Activated T-helper 1 cell treated with anti-CD3 and anti-CD28 coated beads, Interleukin-12 subunit alpha, Interleukin-12 subunit beta, Interleukin-2, Interleukin-4 antibody, amounts not matched to agents 30 ng/mL and 10 ng/mL and 1 ng/mL, durations not matched to agents 14 hours and 24 hours and 36 hours (primary cell): ENCODE measurements at regions of chr5 and their contacts with region 1.

Region 1: DNA sequence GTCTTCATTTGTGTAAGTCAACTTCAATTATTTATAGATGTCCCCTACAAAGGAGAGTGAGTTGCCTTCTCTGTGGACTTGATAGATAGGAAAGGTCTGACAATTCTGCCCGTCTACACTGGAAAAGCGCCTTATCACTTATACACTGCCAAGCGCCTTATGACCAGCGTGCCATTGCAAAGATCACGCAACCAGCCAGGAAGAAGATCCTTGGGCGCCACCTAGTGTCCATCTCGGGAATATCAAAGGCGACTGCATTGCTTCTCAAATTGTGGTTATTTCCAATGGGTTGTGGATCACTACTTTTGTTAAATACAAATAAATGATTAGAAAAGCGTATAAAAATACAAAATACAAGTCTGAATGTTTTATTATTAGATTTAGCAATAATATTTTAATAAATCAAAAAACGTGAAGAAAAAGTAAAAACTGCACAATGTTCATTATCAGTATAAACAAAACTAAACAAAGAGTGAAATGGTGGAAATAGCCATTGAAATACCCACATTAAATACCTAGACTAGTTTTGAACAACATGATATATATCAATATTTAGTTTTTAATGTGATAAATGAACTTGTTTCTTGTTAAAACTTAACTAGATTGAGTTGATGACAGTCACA is 27.8 kb downstream of the SUB1 start:
- DNase-seq: peak; percentile 72
- H3K4me3 Mint-ChIP-seq: no peak overlapping the region
- H3K27ac Mint-ChIP-seq: no peak overlapping the region
- H3K4me1 Mint-ChIP-seq: no peaks in the 10 kb centered on the region
- H3K27me3 Mint-ChIP-seq: no peaks in the 10 kb centered on the region

Region 2: DNA sequence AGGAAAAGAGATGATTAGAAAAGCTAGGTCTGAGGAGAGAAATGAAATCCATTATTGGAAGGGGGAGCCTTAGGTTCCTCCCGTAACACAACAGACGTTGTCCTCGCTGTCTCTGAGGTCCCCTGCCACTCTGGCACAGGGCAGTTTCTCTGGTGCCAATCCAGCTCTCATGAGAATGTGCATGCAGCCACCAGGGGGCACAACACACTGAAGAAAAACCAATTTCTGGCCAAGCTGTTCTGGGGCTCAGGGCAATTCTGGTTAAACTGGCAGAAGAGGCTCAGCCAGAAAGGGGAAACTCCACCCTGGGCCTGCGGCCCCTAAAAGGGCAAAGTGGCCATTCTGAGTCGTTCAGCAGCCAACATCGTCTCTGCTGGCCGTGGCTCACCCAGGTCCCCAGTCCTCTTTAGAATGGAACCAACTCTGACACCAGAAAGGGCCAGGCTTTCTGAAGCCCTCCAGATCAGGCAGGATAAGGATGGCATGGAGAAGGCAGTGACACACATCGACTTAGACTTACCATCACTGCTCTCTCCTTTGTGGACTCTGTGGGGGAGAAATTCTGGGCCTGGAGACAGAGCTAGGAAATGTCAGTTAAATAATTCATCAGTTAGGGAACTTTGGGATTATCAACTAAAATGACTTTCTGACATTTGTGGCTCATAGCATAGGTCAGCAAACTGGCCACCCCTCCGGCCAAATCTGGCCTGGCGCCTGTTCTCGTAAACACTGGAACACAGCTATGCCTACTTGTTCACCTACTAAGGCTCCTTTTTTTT is 380.5 kb before region 1 on chr5:
- intact Hi-C with region 1: loop called (anchors 1 kb)
- DNase-seq: peak; percentile 61
- H3K4me3 Mint-ChIP-seq: no peak overlapping the region
- H3K27ac Mint-ChIP-seq: peak overlapping the region; percentile 47
- H3K4me1 Mint-ChIP-seq: peaks cover 26% of the 10 kb centered on the region
- H3K27me3 Mint-ChIP-seq: peaks cover 1% of the 10 kb centered on the region

Region 3: GRCh38 chr5:32329308-32329834 is 283.8 kb before region 1 on chr5:
- intact Hi-C with region 1: loop called (anchors 1 kb)
- DNase-seq: peak; percentile 40
- H3K4me3 Mint-ChIP-seq: no peak overlapping the region
- H3K27ac Mint-ChIP-seq: no peak overlapping the region
- H3K4me1 Mint-ChIP-seq: peaks cover 4% of the 10 kb centered on the region
- H3K27me3 Mint-ChIP-seq: no peaks in the 10 kb centered on the region

Region 4: GRCh38 chr5:32388432-32389129 is 224.6 kb before region 1 on chr5:
- intact Hi-C with region 1: loop called (anchors 5 kb)
- DNase-seq: no peak
- H3K4me3 Mint-ChIP-seq: peak overlapping the region; percentile 9
- H3K27ac Mint-ChIP-seq: peak overlapping the region; percentile 93
- H3K4me1 Mint-ChIP-seq: peaks cover 22% of the 10 kb centered on the region
- H3K27me3 Mint-ChIP-seq: no peaks in the 10 kb centered on the region

Region 5: DNA sequence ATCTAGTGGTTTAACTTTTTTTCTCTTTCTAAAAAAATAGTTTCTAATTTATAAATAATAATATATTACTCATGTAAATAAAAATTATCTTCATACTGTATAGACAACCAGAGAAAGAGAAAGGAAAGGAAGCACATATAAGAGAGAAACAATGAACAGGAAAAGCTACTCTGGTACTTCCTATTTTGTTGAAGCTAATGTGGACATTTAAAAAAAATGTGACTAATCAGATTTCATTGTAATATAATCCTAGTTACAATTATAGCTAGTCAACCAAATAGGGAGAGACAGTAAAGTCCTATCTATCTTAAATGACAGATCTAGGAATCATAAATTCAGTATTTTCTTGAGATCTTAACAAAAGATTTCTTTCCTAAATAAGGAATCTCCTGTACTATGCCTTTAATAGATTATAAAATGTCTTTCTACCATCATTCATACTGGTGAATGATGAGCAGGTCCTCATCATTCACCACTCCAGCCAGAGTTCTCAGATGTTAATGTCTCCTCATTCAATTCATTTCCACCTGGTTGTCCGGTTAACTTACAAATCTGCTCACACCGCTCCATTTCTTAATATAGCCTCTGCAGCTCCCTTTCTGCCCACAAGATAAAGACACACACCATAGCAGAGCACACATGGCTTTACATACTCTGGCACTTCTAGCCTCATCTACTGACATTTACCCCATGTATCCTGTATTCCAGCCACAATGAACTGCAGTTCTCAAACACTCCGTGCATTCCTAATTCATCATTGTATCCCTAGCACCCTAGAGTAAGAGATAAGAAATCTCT is 199.5 kb before region 1 on chr5:
- intact Hi-C with region 1: loop called (anchors 5 kb)
- DNase-seq: no peak
- H3K4me3 Mint-ChIP-seq: no peak overlapping the region
- H3K27ac Mint-ChIP-seq: peak overlapping the region; percentile 4
- H3K4me1 Mint-ChIP-seq: peaks cover 6% of the 10 kb centered on the region
- H3K27me3 Mint-ChIP-seq: no peaks in the 10 kb centered on the region

Region 6: DNA sequence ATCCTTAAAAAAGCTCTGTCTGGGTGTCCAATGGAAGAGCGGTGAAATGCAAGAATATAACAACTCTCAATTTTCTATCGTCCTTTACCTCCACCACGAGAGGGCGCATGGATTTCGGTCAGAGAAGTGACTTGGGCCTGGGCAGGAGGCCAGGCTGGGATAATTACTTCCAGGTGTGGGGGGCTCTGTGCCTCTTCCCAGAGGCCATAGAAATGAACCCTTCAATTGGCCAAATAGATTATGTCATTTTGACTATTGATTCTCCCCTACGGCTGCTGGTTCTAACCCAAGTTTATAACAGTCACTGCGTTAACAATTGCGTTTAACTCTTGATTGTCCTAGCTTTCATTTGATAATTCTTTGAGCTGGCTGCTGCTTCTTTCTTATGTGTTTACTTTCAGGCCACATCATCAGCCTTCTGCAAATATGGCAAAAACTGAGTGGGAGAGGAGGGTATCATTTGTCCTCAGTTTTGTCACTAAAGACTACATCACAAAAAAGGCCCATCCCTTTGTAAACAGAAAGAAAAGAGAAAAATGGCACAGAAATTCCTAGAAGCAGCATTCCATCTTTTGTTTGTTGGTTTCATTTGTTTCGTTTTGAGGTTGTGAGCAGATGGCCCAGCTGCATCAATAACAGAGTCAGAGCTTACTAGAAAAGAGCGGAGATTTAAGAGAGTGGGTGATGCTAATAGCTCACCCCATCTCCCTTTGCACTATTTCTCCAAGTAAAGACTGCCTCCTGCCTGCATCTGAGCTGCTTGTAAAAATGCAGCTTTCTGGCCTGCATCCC is 123.2 kb before region 1 on chr5:
- intact Hi-C with region 1: loop called (anchors 1 kb)
- DNase-seq: peak; percentile 59
- H3K4me3 Mint-ChIP-seq: no peak overlapping the region
- H3K27ac Mint-ChIP-seq: no peak overlapping the region
- H3K4me1 Mint-ChIP-seq: peaks cover 8% of the 10 kb centered on the region
- H3K27me3 Mint-ChIP-seq: peaks cover 3% of the 10 kb centered on the region

Region 7: DNA sequence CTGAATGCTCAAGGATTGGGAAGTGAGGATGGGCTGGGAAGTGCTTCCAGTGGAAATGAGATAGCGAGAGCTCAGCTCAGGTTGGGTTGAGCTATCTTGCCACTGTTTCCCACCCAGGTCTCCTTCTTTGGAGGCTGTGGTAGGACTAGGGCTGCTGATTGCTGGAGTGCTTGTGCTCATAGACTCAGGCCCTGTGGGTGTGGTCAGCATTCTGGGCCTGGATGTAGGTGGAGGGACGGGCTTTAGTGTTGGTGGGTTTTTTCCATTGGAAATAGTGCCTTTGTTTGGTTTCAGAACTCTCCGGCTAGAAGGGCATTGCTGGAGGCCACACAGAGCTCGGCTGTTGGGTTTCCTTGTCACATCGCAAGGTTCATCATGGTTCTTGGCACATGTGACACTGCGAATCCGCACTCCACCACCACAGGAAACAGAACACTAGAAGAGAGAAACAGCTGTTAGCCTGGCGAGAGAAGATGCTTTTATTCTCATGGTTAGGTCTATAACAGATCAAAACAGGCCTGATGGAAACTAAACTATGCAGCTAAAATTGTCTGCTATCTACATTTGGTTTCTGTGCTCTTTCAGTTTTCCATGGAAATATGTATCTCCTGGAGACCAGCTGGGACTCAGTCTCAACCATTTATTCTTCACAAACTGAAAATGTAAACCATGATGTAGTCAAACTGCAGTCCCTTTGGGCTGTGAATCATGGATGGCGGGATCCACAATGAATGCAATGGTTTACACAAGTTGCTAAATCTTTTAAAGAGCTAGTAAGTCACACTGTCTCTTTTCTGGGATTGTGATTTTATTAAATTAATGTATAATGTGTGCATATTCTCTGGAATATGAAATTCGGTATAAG is 963.8 kb after region 1 on chr5:
- intact Hi-C with region 1: no loop called
- DNase-seq: no peak
- H3K4me3 Mint-ChIP-seq: no peak overlapping the region
- H3K27ac Mint-ChIP-seq: no peak overlapping the region
- H3K4me1 Mint-ChIP-seq: no peaks in the 10 kb centered on the region
- H3K27me3 Mint-ChIP-seq: no peaks in the 10 kb centered on the region